PC-3 (cell line): ENCODE measurements at regions of chr15 and their contacts with region 1.

Region 1: DNA sequence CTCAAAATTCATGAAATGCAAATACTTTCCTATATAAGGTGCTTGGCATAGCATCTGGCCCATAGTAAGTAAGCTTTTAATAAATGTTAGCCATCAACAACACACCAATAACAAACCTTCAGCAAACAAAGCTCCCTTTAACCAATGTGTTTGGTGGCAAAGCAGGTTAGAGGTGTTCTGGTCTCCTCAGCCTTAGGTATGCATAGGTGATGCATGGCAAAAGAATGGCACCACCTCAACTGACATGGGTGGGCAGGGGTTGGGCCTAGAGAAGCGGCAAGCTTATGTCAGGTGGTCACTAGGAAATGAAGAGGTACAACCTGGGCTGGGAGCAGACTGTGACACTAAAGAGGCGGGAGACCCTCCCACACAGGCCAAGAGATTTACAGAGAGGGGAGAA is 38.2 kb downstream of the MRPS11 start:
- DNase-seq: peak; percentile 28
- ATAC-seq: no peak
- H3K4me3 ChIP-seq: no peak overlapping the region
- H3K27ac ChIP-seq: no peak overlapping the region
- H3K4me1 ChIP-seq: no peaks in the 10 kb centered on the region
- H3K27me3 ChIP-seq: no peaks in the 10 kb centered on the region
- CTCF ChIP-seq: no peak

Region 2: DNA sequence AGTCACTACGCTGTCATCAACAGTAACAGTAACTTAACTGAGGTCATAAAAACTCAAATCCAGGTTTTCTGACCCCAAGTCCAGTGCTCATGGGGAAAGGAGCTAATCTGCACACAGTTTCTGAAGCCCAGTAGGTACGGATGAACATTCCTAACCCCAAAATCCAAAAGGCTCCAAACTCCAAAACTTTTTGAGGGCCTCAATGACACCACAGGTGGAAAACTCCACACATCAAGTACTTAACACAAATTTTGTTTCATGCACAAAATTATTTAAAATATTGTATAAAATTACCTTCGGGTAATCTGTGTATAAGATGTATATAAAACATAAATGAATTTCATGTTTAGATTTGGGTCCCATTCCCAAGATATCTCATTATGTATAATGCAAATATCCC is 49.0 kb before region 1 on chr15:
- CTCF ChIA-PET with region 1: no interaction called
- POLR2A ChIA-PET with region 1: no interaction called
- intact Hi-C with region 1: no loop called
- DNase-seq: no peak
- ATAC-seq: no peak
- H3K4me3 ChIP-seq: no peak overlapping the region
- H3K27ac ChIP-seq: no peak overlapping the region
- H3K4me1 ChIP-seq: 0 out of 2 replicates have a peak, but pooled peaks cover 5% of the 10 kb centered on the region
- H3K27me3 ChIP-seq: no peaks in the 10 kb centered on the region
- CTCF ChIP-seq: no peak

Region 3: GRCh38 chr15:88467073-88467934 is 38.4 kb before region 1 on chr15 and contains the starts of genes MRPL46 and MRPS11:
- CTCF ChIA-PET with region 1: no interaction called
- POLR2A ChIA-PET with region 1: no interaction called
- intact Hi-C with region 1: no loop called
- DNase-seq: peak; percentile 86
- ATAC-seq: peak; percentile 86
- H3K4me3 ChIP-seq: peak within 1 kb of the TSS; percentile 91
- H3K27ac ChIP-seq: peak within 1 kb of the TSS; percentile 73
- H3K4me1 ChIP-seq: peaks cover 21% of the 10 kb centered on the region
- H3K27me3 ChIP-seq: no peaks in the 10 kb centered on the region
- CTCF ChIP-seq: no peak
- total RNA-seq, gene MRPL46: 33.9 and 42.7 TPM in 2 replicates
- total RNA-seq, gene MRPS11: 76.0 and 92.7 TPM in 2 replicates

Region 4: GRCh38 chr15:88479169-88479568 is 26.6 kb before region 1 on chr15:
- CTCF ChIA-PET with region 1: no interaction called
- POLR2A ChIA-PET with region 1: no interaction called
- intact Hi-C with region 1: no loop called
- DNase-seq: no peak
- ATAC-seq: no peak
- H3K4me3 ChIP-seq: no peak overlapping the region
- H3K27ac ChIP-seq: no peak overlapping the region
- H3K4me1 ChIP-seq: no peaks in the 10 kb centered on the region
- H3K27me3 ChIP-seq: no peaks in the 10 kb centered on the region
- CTCF ChIP-seq: 0 out of 2 replicates have a peak, but pooled peaks have one; percentile 10

Region 5: DNA sequence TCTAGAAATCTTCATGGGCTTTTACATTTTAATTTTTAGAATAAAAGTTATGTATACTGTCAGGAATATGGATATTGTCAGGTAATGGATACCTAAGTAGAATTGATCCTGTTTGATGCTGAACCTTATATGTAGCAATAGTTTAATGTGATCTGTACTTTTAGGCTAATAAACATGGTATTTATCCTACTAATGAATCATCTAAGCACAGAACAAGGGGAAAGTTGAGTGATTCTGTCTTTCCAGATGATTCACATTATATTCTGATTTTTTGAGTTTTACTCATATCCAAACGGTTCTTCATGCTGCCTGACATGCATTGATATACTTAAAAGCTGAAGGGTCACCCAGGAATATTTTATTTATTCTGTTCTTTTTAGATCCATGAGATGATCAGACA is 772.6 kb after region 1 on chr15:
- CTCF ChIA-PET with region 1: no interaction called
- POLR2A ChIA-PET with region 1: interaction called, 19 read pairs
- intact Hi-C with region 1: no loop called
- DNase-seq: peak; percentile 42
- ATAC-seq: peak; percentile 70
- H3K4me3 ChIP-seq: 0 out of 2 replicates have a peak overlapping the region, but pooled peaks have one; percentile 17
- H3K27ac ChIP-seq: peak overlapping the region; percentile 65
- H3K4me1 ChIP-seq: peaks cover 17% of the 10 kb centered on the region
- H3K27me3 ChIP-seq: no peaks in the 10 kb centered on the region
- CTCF ChIP-seq: no peak